Aorta (tissue), 5 donors: ENCODE measurements at regions of chr3 and their contacts with region 1.

Region 1: DNA sequence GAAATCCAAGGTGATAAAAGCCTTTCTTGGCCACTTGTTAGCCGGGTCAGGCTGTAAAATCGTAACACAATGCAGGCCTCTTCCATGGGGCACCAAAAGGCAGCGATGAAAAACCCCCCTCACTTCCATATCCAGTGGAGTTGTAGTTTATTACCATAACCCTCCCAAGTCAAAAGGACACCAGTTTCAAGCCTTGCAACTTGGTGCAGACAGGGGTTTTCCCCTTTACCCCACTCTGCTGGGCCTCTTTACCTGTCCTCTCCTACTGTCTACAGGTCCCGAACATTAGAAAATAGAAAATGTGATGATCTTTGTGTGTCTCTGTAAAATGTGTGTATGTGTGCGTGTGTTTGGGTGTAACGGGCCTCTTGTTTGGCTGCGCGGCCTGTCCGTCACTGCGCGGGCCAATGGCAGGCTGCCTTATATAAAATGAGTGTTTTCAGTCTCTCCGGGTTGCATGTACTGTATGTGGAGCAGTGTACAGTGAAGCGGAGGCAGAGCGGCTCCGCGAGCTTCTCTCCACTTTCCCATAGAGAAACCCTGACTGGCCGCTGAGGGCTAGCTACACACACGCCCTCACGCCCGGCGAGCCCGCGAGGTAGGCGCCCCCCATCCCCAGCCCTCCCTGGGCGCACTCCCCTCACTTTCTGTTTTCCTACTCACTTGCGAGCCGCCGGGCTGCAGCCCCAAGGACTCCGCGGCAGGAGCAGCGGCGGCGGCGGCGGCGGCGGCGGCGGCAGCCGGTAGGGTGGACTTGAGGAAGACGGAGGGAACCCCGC is at the start of gene BBX:
- DNase-seq: peak; percentile 92 to 95
- ATAC-seq: peak; percentile 97
- H3K4me3 ChIP-seq: peak within 1 kb of the TSS; percentile 94
- H3K27ac ChIP-seq: peak within 1 kb of the TSS; percentile 57 to 70
- H3K4me1 ChIP-seq: no peaks in the 10 kb centered on the region
- H3K27me3 ChIP-seq: no peaks in the 10 kb centered on the region
- total RNA-seq, gene BBX: 76.7 to 77.8 TPM

Region 2: GRCh38 chr3:106144030-106144429 is 1378.7 kb before region 1 on chr3:
- intact Hi-C with region 1: no loop called
- DNase-seq: no peak
- ATAC-seq: no peak
- H3K4me3 ChIP-seq: no peak overlapping the region
- H3K27ac ChIP-seq: no peak overlapping the region
- H3K4me1 ChIP-seq: no peaks in the 10 kb centered on the region
- H3K27me3 ChIP-seq: no peaks in the 10 kb centered on the region

Region 3: GRCh38 chr3:107429320-107430181 is 93.1 kb before region 1 on chr3:
- intact Hi-C with region 1: loop called (anchors 1 to 5 kb)
- DNase-seq: peak; percentile 84 to 88
- ATAC-seq: peak; percentile 93
- H3K4me3 ChIP-seq: peak overlapping the region; percentile 74 to 97
- H3K27ac ChIP-seq: peak overlapping the region; percentile 84 to 89
- H3K4me1 ChIP-seq: no peaks in the 10 kb centered on the region
- H3K27me3 ChIP-seq: no peaks in the 10 kb centered on the region

Region 4: DNA sequence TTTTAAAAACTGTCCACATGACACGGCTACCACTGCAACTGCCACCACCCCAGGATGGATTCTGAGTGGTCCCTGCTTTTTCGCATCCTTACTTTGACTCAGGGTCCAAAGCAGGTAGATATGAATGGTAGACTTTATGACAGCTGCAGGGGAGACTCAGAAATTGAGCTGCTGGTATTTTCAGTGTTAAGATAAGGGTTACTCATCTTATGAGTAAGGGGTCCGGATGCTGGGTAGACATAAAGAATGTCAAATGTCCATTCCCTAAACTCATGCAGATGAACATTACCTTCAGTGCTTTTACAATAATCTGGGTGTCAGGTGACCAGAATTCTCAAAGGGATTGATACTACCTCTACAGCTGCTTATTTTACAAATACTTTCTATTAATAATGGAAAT is 25.8 kb before region 1 on chr3:
- intact Hi-C with region 1: no loop called
- DNase-seq: no peak
- ATAC-seq: no peak
- H3K4me3 ChIP-seq: no peak overlapping the region
- H3K27ac ChIP-seq: no peak overlapping the region
- H3K4me1 ChIP-seq: no peaks in the 10 kb centered on the region
- H3K27me3 ChIP-seq: no peaks in the 10 kb centered on the region